Activated CD4-positive, alpha-beta T cell treated with anti-CD3 and anti-CD28 coated beads for 36 hours (primary cell): ENCODE measurements at regions of chr7 and their contacts with region 1.

Region 1: DNA sequence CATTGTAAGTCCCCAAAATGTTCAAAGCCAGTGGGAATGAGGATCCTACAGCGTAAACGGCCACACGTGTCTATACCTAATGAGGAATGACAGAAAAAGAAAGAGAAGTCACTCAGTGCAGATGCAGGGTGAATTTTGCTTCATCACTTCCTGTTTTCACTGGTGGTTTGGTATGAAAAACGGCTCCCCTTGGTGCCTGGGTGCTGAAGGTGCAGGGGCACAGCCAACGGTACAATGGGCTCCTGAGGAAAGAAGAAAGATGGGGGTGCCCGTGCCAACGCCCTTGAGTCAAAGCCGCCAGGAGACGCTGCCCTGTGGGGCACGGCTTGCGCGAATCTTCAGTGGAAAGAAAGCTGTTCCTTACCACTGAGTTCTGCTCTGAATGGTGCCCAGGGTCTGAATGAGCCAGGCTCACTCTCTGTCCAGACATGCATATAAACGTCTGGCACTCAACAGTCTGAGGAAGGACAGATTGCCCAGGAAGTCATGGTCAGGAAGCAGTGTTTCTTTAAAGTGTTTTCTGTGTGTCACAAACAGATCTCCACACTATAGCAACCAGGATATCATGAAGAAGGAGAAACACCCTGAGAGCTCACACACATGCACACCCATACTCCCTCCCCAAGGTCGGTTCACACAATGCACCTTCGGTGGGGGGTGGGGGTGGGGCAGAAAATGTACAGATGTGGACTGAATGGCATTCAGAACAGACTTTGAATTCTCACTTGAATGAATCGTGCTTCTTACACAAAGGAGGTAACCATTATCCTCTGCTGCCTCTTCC is 105.8 kb downstream of the ELMO1 start:
- DNase-seq: peak; percentile 85
- ATAC-seq: peak; percentile 83
- H3K4me3 Mint-ChIP-seq: peak overlapping the region; percentile 89
- H3K27ac Mint-ChIP-seq: peak overlapping the region; percentile 95
- H3K4me1 Mint-ChIP-seq: peaks cover 77% of the 10 kb centered on the region
- H3K27me3 Mint-ChIP-seq: no peaks in the 10 kb centered on the region

Region 2: GRCh38 chr7:37311355-37311754 is 31.5 kb before region 1 on chr7:
- CTCF ChIA-PET with region 1: interaction called, 6 read pairs
- POLR2A ChIA-PET with region 1: interaction called, 4 read pairs
- intact Hi-C with region 1: loop called (anchors 2 kb)
- DNase-seq: peak; percentile 54
- ATAC-seq: peak; percentile 79
- H3K4me3 Mint-ChIP-seq: no peak overlapping the region
- H3K27ac Mint-ChIP-seq: peak overlapping the region; percentile 74
- H3K4me1 Mint-ChIP-seq: peaks cover 72% of the 10 kb centered on the region
- H3K27me3 Mint-ChIP-seq: no peaks in the 10 kb centered on the region